Aorta (tissue), 5 donors: ENCODE measurements at regions of chrX and their contacts with region 1.

Region 1: GRCh38 chrX:23782863-23783568 is at the start of gene SAT1:
- DNase-seq: peak; percentile 97 to 98
- ATAC-seq: peak; percentile 97
- H3K4me3 ChIP-seq: peak within 1 kb of the TSS; percentile 78 to 95
- H3K27ac ChIP-seq: peak within 1 kb of the TSS; percentile 23 to 98
- H3K4me1 ChIP-seq: no peaks in the 10 kb centered on the region
- H3K27me3 ChIP-seq: no peaks in the 10 kb centered on the region
- total RNA-seq, gene SAT1: 269 to 353 TPM

Region 2: GRCh38 chrX:23694606-23695005 is 88.4 kb before region 1 on chrX:
- intact Hi-C with region 1: loop called (anchors 10 kb)
- DNase-seq: peak in 1 of 2 donors; percentile 64
- ATAC-seq: no peak
- H3K4me3 ChIP-seq: no peak overlapping the region
- H3K27ac ChIP-seq: no peak overlapping the region
- H3K4me1 ChIP-seq: no peaks in the 10 kb centered on the region
- H3K27me3 ChIP-seq: no peaks in the 10 kb centered on the region

Region 3: DNA sequence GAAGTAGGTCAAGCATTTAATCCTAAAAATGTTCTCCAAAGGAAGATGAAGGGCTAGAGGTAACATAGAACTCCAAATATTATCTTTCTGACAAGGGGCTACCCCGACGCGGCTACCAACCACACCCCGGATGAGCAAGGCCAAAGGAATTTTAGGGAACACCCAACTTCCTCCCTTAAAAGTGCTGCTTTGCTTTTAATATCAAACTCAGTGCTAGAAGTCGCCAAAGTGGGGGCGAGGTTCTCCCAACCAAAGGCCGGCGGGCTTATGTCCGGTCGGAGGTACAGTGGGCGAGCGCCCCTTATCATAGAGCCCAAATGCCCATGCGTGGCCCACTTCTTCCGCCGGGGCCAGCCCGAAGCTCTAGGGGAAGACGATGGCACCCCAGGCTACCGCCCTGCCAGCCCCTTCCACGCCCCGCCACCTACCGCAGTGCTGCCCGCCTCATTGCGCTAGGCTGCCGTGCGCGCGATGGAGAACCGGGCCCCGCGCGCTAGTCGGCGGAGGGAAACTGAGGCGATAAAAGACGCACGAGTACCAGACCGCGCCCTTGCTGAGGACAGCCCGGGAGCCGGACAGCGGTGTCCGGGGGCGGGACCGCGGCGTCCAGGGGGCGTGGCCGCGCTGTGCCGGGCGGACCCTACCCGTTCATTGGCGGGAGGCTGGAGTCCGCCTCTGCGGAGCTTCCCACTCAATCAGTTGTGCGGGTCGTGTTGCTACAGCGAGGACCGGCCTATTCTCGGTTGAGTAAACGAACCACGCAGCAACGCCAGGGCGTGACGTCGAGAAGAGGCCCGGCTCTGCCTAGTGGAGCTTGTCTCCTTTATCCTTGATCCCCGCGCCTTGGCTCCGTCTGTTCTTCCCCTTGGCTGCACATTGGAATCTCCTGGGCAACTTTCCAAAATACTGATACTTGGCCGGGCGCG is 40.1 kb before region 1 on chrX and contains the start of gene ACOT9:
- intact Hi-C with region 1: loop called in 1 of 2 experiments (anchors 2 kb)
- DNase-seq: peak; percentile 95 to 96
- ATAC-seq: peak; percentile 97
- H3K4me3 ChIP-seq: peak within 1 kb of the TSS; percentile 46 to 94
- H3K27ac ChIP-seq: peak within 1 kb of the TSS; percentile 76 to 99
- H3K4me1 ChIP-seq: no peaks in the 10 kb centered on the region
- H3K27me3 ChIP-seq: no peaks in the 10 kb centered on the region
- total RNA-seq, gene ACOT9: 59.1 to 69.1 TPM

Region 4: DNA sequence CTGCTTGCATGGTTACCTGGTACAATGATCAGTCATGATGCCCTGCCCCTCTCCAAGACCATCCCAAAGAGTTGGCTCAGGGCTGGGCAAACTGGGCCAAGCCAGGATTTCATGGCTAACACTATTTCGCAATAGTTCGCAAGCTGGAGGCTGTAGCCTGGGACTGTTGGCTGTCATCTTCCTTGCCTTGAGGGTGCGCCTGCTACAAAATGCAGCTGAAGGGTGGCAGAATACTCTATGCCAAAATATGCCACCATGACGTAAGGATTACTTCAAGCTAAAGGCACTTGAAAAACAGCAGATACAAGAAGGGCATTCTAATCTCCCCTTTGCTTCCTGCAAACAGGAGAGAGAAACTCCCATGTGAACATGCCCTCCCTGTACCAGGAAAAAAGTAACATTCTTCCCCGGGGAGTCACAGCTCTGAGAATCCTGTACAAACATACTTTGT is 20.9 kb after region 1 on chrX:
- intact Hi-C with region 1: loop called in 1 of 2 experiments (anchors 2 kb)
- DNase-seq: no peak
- ATAC-seq: peak; percentile 41
- H3K4me3 ChIP-seq: no peak overlapping the region
- H3K27ac ChIP-seq: peak overlapping the region in 1 of 2 donors; percentile 21
- H3K4me1 ChIP-seq: no peaks in the 10 kb centered on the region
- H3K27me3 ChIP-seq: no peaks in the 10 kb centered on the region

Region 5: DNA sequence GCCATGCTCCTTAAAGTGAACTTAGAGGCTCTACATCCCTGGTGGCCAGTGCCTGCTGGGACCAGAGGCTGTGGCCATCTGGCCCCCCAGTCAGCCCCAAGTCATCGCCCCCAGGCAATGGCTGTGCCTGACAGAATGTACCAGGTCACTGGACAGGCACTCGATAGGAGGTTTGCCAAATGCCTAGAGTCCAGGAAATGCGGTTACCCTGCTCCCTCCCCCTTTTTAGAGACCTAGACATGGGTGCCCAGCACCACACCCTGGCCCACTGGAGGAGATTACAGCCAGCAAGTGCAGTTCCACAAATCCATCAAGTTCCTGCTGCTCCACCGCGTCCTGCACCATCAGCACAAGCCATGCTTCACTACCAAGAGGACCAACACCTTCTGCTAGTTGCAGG is 350.3 kb after region 1 on chrX:
- intact Hi-C with region 1: no loop called
- DNase-seq: no peak
- ATAC-seq: no peak
- H3K4me3 ChIP-seq: no peak overlapping the region
- H3K27ac ChIP-seq: no peak overlapping the region
- H3K4me1 ChIP-seq: no peaks in the 10 kb centered on the region
- H3K27me3 ChIP-seq: no peaks in the 10 kb centered on the region